ENCODE measurements at regions of chr2 and their contacts with region 1.

Region 1: DNA sequence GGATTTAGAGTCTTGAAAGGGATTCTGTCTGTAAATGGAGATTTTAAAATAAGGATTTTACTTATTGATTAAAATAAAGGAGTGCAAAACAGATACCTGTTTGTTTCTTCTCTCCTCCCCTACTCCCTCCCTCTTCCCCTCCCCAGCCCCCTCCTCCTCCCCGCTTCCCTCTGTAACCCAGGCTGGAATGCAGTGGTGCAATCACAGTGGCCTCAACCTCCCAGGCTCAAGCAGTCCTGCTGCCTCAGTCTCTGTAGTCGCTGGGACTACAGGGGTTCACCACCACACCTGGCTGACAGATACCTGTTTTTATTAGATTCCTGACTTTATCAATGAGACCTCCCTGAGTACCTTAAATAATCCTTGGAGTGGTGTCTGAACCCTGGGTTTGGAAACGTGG is 57.1 kb downstream of the OXER1 start:
- DNase-seq: no peak
- ATAC-seq: no peak
- H3K4me3 ChIP-seq: no peak overlapping the region
- H3K27ac ChIP-seq: no peak overlapping the region
- H3K4me1 ChIP-seq: no peaks in the 10 kb centered on the region
- H3K27me3 ChIP-seq: no peaks in the 10 kb centered on the region
- CTCF ChIP-seq: no peak

Region 2: DNA sequence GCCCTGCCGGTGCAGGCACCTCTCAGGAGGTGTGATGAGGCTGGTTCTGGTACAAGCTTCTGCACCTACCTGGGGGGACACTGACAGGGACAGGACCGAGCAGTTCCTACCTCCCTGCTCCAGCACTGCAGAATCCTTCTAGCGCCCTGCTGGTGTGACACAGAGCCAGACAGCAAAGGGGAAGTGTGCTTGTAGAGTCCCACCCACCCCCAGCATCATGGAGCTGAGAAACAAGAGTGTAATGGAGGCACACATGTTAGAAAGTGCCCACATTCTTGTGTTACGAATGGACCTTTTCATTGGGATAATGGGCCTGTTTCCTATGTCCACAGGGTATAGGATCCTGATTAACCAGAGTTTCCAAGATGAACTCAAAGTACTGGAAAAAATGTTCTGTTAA is 18.8 kb after region 1 on chr2:
- CTCF ChIA-PET with region 1: no interaction called
- POLR2A ChIA-PET with region 1: interaction called, 14 read pairs
- intact Hi-C with region 1: no loop called
- DNase-seq: no peak
- ATAC-seq: no peak
- H3K4me3 ChIP-seq: no peak overlapping the region
- H3K27ac ChIP-seq: no peak overlapping the region
- H3K4me1 ChIP-seq: no peaks in the 10 kb centered on the region
- H3K27me3 ChIP-seq: no peaks in the 10 kb centered on the region
- CTCF ChIP-seq: no peak

Region 3: DNA sequence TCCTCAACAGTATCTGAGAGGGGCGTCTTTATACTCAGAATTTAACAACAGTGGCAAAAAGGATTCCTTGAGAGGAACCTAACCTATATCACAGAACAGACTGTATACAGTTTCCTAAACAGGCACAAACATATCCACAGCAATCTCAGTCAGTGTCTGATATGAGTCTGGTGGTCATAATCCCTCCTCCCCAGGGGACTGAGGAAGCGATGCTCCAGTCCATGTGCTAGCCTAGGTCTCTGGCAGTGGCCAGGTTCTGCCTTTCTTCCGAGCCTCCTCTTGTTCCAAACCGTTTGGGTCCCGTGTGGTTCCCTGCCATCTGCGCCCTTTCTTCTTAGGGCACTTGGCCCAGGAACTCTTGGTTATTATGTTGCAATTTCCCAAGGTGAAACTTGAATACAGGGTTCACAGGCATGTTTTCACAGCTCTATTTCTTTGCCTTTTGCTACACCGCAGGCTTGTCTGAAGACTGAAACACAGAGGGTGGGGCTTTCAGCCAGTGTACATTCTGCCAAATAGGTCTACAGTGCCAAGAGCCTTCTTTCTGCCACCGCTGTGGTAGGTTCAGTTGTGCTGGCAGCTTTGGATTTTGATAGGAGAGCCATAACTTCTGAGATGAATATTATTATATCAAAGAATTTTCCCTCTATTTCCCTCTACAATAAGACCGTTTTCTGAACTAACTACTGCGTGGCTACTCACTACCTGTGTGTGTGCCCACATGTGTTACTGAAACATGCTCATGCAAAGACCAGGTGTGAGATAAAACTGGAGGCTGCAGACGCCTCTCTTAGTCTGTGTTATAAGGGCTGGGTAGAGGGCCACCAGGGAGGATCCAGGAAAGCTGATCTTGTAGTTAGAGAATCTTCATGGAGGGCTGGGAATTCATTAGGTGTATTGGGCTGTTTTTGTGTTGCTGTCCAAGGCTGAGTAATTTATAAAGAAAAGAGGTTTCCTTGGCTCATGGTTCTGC is 160.5 kb after region 1 on chr2:
- CTCF ChIA-PET with region 1: no interaction called
- POLR2A ChIA-PET with region 1: interaction called, 27 read pairs
- intact Hi-C with region 1: no loop called
- DNase-seq: no peak
- ATAC-seq: no peak
- H3K4me3 ChIP-seq: no peak overlapping the region
- H3K27ac ChIP-seq: no peak overlapping the region
- H3K4me1 ChIP-seq: no peaks in the 10 kb centered on the region
- H3K27me3 ChIP-seq: no peaks in the 10 kb centered on the region
- CTCF ChIP-seq: no peak